ENCODE measurements at regions of chr7 and their contacts with region 1.

Region 1: DNA sequence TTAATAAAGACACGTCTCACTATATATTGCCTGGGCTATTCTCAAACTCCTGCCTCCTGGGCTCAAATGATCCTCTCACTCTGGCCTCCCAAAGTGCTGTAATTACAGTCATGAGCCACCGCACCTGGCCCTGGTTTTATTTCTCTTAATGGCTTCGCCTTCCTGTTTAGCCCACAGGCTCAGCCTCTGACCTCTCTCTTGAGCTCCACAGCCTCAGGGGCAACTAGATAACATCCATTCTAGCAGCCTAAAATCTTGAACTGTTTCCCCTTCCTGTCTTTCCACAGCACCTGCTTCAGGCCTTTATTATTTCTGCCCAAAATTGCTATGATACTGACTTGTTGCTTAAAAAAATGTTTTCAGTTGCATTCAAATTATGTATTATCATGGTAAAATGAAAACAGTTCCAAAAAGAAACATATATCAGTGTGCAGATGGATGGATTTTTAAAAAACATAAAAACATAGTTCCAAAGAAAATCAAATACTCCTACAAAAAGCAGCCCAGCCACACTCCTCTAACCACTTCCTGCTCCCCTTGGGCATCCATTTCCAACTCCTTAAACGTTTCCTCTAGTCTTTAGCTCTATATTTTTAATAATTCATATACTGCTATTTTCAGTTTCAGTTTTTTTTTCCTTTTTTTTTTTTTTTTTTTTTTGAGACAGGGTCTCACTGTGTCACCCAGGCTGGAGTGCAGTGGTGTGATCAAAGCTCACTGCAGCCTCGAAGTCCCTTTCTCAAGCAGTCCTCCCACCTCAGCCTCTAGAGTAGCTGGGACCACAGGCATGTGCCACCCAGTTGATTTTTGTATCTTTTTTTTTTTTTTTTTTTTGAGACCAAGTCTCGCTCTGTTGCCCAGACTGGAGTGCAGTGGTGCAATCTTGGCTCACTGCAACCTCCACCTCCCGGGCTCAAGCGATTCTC is 5.1 kb upstream of the BAZ1B start:
- DNase-seq: peak; percentile 31 to 80 (median 68)
- H3K4me3 ChIP-seq: peak overlapping the region in 1 of 7 experiments; percentile 45
- H3K27ac ChIP-seq: peak overlapping the region in 1 of 2 experiments; percentile 68
- H3K4me1 ChIP-seq: peaks cover 15 to 50% (median 39%) of the 10 kb centered on the region in 4 experiments
- H3K27me3 ChIP-seq: no peaks in the 10 kb centered on the region

Region 2: DNA sequence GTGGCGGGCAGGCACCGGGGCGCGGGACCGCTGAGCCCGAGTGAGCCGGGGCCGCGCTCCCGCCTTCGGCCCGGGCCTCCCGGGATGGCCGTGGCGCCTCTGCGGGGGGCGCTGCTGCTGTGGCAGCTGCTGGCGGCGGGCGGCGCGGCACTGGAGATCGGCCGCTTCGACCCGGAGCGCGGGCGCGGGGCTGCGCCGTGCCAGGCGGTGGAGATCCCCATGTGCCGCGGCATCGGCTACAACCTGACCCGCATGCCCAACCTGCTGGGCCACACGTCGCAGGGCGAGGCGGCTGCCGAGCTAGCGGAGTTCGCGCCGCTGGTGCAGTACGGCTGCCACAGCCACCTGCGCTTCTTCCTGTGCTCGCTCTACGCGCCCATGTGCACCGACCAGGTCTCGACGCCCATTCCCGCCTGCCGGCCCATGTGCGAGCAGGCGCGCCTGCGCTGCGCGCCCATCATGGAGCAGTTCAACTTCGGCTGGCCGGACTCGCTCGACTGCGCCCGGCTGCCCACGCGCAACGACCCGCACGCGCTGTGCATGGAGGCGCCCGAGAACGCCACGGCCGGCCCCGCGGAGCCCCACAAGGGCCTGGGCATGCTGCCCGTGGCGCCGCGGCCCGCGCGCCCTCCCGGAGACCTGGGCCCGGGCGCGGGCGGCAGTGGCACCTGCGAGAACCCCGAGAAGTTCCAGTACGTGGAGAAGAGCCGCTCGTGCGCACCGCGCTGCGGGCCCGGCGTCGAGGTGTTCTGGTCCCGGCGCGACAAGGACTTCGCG is 93.0 kb before region 1 on chr7:
- CTCF ChIA-PET with region 1: no interaction called
- POLR2A ChIA-PET with region 1: no interaction called
- DNase-seq: peak; percentile 22 to 69 (median 58)
- H3K4me3 ChIP-seq: peak overlapping the region in 5 of 7 experiments; percentile 15 to 65 (median 56)
- H3K27ac ChIP-seq: no peak overlapping the region
- H3K4me1 ChIP-seq: peaks cover 0 to 6% (median 4%) of the 10 kb centered on the region in 4 experiments
- H3K27me3 ChIP-seq: peaks cover 0 to 16% (median 0%) of the 10 kb centered on the region in 5 experiments

Region 3: GRCh38 chr7:73547841-73548240 is 20.7 kb after region 1 on chr7:
- CTCF ChIA-PET with region 1: interaction called, 10 read pairs
- POLR2A ChIA-PET with region 1: no interaction called
- DNase-seq: no peak
- H3K4me3 ChIP-seq: no peak overlapping the region
- H3K27ac ChIP-seq: no peak overlapping the region
- H3K4me1 ChIP-seq: no peaks in the 10 kb centered on the region
- H3K27me3 ChIP-seq: no peaks in the 10 kb centered on the region

Measured in common myeloid progenitor, CD34-positive (primary cell).